Endothelial cell of umbilical vein (primary cell): ENCODE measurements at regions of chr1 and their contacts with region 1.

Region 1: GRCh38 chr1:112501810-112502641 is 6.7 kb upstream of the WNT2B start:
- DNase-seq: peak; percentile 71
- H3K4me3 ChIP-seq: peak overlapping the region; percentile 9 to 46 (median 38)
- H3K27ac ChIP-seq: no peak overlapping the region
- H3K4me1 ChIP-seq: peaks cover 6% of the 10 kb centered on the region
- H3K27me3 ChIP-seq: no peaks in the 10 kb centered on the region
- CTCF ChIP-seq: peak; percentile 69 to 90
- POLR2A ChIP-seq: no peak

Region 2: DNA sequence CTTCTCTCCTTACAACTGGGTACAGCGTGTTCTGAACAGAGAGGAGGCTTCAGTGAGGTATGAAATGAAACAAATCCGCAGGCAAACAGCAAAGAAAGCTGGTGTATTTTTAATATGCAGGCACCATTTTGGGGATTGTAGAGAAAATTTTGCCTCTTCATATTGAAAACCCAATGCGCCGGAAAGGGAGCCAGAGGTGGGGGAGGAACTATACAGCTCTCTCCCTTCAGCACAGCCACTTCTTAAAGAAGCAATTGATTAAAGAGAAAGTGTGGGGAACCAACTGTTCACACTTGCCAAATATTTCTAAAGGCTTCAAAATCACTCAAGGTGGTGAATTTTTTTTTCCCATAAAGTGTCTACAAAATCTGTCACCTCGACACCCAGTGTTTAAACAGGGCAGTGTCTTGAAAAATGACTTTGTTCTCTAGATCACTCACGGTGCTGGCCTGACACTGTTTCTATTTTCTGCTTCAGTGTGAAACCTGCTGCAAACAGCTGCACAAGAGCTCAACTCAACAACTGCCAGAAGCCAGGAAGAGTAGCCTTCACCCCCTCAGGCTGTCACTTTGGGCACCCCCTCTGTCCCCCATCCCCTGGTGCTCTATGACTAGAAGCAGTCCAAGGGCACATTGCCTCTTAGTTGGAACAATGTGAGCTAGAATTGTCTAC is 229.8 kb before region 1 on chr1:
- CTCF ChIA-PET with region 1: no interaction called
- POLR2A ChIA-PET with region 1: no interaction called
- dilution Hi-C with region 1: no loop called
- intact Hi-C with region 1: no loop called
- DNase-seq: no peak
- H3K4me3 ChIP-seq: no peak overlapping the region
- H3K27ac ChIP-seq: no peak overlapping the region
- H3K4me1 ChIP-seq: no peaks in the 10 kb centered on the region
- H3K27me3 ChIP-seq: peaks cover 0 to 4% of the 10 kb centered on the region in 2 experiments
- CTCF ChIP-seq: no peak
- POLR2A ChIP-seq: no peak

Region 3: GRCh38 chr1:112466078-112466660 is 35.9 kb before region 1 on chr1:
- CTCF ChIA-PET with region 1: interaction called, 23 read pairs
- POLR2A ChIA-PET with region 1: no interaction called
- dilution Hi-C with region 1: no loop called
- intact Hi-C with region 1: no loop called
- DNase-seq: peak; percentile 97
- H3K4me3 ChIP-seq: peak overlapping the region in 1 of 3 experiments; percentile 5
- H3K27ac ChIP-seq: peak overlapping the region; percentile 59
- H3K4me1 ChIP-seq: peaks cover 28% of the 10 kb centered on the region
- H3K27me3 ChIP-seq: no peaks in the 10 kb centered on the region
- CTCF ChIP-seq: peak; percentile 82 to 85
- POLR2A ChIP-seq: peak; percentile 71

Region 4: GRCh38 chr1:112522621-112523020 is 20.6 kb after region 1 on chr1:
- CTCF ChIA-PET with region 1: interaction called, 15 read pairs
- POLR2A ChIA-PET with region 1: no interaction called
- dilution Hi-C with region 1: no loop called
- intact Hi-C with region 1: no loop called
- DNase-seq: no peak
- H3K4me3 ChIP-seq: no peak overlapping the region
- H3K27ac ChIP-seq: no peak overlapping the region
- H3K4me1 ChIP-seq: no peaks in the 10 kb centered on the region
- H3K27me3 ChIP-seq: no peaks in the 10 kb centered on the region
- CTCF ChIP-seq: no peak
- POLR2A ChIP-seq: no peak

Region 5: DNA sequence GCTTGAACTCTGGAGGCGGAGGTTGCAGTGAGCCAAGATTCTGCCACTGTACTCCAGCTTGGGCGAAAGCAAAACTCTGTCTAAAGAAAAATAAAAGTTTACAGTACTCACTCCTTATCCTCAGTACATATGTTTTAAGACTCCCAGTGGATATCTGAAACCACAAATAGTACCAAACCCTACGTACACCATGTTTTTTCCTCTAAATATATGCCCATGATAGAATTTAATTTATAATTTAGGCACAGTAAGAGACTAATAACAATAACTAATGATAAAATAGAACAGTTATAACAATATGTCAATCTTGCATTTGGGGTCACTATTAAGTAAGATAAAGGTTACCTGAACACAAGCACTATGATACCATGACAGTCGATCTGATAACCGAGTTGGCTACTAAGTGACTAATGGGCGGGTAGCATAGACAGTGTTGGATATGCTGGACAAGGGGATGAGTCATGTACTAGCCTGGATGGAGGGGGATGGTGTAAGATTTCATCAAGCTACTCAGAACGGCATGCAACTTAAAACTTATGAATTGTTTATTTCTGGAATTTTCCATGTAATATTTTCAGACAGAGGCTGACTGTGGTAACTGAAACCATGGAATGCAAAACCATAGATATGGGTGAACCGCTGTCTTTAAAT is 73.3 kb after region 1 on chr1:
- CTCF ChIA-PET with region 1: interaction called, 18 read pairs
- POLR2A ChIA-PET with region 1: no interaction called
- dilution Hi-C with region 1: no loop called
- intact Hi-C with region 1: no loop called
- DNase-seq: peak; percentile 45
- H3K4me3 ChIP-seq: no peak overlapping the region
- H3K27ac ChIP-seq: no peak overlapping the region
- H3K4me1 ChIP-seq: peaks cover 14% of the 10 kb centered on the region
- H3K27me3 ChIP-seq: no peaks in the 10 kb centered on the region
- CTCF ChIP-seq: no peak
- POLR2A ChIP-seq: no peak

Region 6: GRCh38 chr1:112614460-112615065 is 112.5 kb after region 1 on chr1:
- CTCF ChIA-PET with region 1: interaction called, 110 read pairs
- POLR2A ChIA-PET with region 1: no interaction called
- dilution Hi-C with region 1: no loop called
- intact Hi-C with region 1: loop called (anchors 1 kb)
- DNase-seq: peak; percentile 64
- H3K4me3 ChIP-seq: no peak overlapping the region
- H3K27ac ChIP-seq: no peak overlapping the region
- H3K4me1 ChIP-seq: peaks cover 14% of the 10 kb centered on the region
- H3K27me3 ChIP-seq: no peaks in the 10 kb centered on the region
- CTCF ChIP-seq: peak; percentile 40 to 49
- POLR2A ChIP-seq: no peak

Region 7: DNA sequence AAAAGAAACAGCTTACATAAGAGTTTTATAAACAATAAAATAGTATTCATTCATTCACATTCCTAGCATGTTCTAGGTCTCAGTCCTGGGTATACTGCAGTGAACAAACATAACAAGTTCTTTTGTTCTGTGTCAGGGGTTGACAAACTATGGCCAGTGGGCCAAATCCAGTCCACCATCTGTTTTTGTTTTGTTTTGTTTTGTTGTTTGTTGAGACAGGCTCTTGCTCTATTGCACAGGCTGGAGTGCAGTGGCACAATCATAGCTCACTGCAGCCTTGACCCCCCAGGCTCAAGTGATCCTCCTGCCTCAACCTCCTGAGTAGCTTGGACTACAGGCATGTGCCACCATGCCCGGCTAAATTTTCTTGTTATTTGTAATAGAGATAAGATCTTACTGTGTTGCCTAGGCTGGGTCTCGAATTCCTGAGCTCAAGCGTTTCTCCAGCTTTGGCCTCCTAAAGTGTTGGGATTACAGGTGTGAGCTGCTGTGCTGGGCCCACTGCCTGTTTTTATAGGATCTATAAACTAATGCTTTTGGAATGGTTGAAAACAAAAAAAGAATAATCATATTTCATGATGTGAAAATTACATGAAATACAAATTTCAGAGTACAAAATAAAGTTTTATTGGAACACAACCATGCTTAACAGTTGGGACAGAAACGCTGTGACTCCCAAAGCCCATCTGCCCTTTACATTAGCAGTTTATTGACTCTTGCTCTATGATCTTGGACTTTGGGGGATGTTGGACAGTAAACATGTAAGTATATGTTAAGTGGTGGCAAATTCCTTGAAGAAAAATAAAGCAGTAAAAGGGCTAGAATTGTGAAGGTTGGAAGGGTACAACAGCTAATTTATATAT is 135.5 kb after region 1 on chr1:
- CTCF ChIA-PET with region 1: interaction called, 14 read pairs
- POLR2A ChIA-PET with region 1: no interaction called
- dilution Hi-C with region 1: no loop called
- intact Hi-C with region 1: no loop called
- DNase-seq: no peak
- H3K4me3 ChIP-seq: no peak overlapping the region
- H3K27ac ChIP-seq: peak overlapping the region; percentile 66
- H3K4me1 ChIP-seq: peaks cover 26% of the 10 kb centered on the region
- H3K27me3 ChIP-seq: no peaks in the 10 kb centered on the region
- CTCF ChIP-seq: no peak
- POLR2A ChIP-seq: no peak

Region 8: DNA sequence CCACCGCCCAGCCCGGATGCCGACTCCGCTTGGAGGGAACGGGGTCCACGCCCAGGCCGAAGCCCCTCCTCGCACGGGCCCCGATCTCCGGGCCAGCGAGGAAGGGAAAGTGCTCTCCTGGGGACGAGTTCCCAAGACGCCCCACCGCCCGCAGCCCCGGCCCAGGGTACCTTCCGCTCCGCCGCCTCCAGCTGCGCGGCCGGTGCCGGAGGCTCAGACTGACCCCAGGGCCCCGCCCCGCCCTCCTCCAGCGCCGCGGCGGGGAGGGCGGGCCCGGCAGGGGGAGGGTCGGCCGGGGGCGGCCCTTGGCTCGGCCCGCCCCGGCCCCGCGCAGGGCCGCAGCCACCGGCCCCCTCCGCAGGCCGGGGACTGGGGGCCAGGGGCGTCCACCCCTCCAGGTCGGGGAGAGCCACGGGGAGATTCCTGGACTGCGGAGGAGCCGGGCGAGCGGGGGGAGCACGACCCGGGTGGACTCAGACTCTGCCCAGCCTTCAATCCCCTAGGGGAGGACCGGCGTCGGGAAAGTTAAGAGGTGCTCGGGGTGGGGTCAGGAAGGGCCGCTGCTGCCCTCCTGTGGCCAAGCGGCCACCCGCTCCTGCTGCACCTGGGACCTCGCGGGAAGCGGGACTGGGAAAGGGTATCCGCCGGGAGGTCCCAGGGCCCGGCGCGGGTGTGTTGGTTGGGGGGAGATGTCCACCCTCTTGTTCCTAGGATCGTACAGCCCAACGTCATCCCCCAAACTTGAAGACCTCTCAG is 205.1 kb after region 1 on chr1 and contains the start of gene RHOC:
- CTCF ChIA-PET with region 1: interaction called, 37 read pairs
- POLR2A ChIA-PET with region 1: no interaction called
- dilution Hi-C with region 1: no loop called
- intact Hi-C with region 1: loop called (anchors 1 kb)
- DNase-seq: peak; percentile 88
- H3K4me3 ChIP-seq: peak within 1 kb of the TSS; percentile 81 to 90 (median 89)
- H3K27ac ChIP-seq: peak within 1 kb of the TSS; percentile 88
- H3K4me1 ChIP-seq: peaks cover 40% of the 10 kb centered on the region
- H3K27me3 ChIP-seq: no peaks in the 10 kb centered on the region
- CTCF ChIP-seq: peak; percentile 97 to 98
- POLR2A ChIP-seq: peak; percentile 83
- total RNA-seq, gene RHOC: 652 and 699 TPM in 2 replicates